ENCODE measurements at regions of chr2 and their contacts with region 1.

Region 1: GRCh38 chr2:45650851-45651414 is 542 bp upstream of the PRKCE start:
- DNase-seq: peak; percentile 84 to 97 (median 97)
- ATAC-seq: peak; percentile 97
- H3K4me3 ChIP-seq: peak overlapping the region; percentile 95
- H3K4me3 Mint-ChIP-seq: peak overlapping the region; percentile 83 to 100 (median 95)
- H3K27ac ChIP-seq: peak overlapping the region; percentile 79
- H3K27ac Mint-ChIP-seq: peak overlapping the region; percentile 90 to 99 (median 95)
- H3K4me1 ChIP-seq: peaks cover 10 to 11% of the 10 kb centered on the region in 2 donors
- H3K4me1 Mint-ChIP-seq: peaks cover 20 to 41% (median 34%) of the 10 kb centered on the region in 7 donors
- H3K27me3 ChIP-seq: peaks cover 0 to 3% of the 10 kb centered on the region in 2 donors
- H3K27me3 Mint-ChIP-seq: peaks cover 0 to 25% (median 0%) of the 10 kb centered on the region in 5 donors

Region 2: DNA sequence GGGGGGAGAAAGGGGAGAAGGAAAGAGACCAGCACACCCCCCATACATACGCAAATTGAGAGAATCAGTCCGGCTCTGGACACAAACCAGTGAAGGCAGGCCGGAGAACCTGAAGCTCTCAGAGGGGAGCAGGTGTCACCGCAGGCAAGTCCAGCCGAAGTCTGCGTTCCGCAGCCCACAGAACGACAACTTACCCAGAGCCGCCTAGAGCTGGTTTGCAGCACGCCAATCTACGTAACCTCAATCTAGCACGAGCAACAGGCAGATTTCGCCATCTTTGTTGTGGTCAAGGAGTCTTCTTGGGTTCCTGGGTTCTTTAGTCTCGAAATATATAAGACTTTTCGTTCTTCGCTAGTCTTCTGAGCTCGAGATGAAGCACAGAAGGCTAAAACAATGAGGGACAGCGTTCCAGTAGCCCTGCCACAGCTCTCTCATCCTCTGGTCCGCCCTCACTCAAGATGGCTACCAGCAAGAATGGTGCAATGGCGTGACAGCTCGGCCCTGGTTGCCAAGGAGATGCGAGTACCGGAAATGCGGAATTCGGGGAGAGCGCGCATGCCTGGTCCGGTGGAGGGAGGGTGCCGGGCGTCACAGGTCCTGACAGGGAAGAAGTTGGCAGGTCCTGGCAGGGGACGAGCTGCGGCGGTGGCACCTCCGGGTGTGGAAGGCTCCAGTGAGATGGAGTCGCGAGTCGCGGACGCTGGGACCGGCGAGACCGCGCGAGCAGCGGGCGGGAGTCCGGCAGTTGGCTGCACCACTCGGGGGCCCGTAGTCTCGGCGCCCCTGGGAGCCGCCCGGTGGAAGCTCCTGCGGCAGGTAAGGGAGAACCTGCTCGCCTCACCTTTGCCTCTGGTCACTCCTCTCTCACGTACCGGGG is 1289.4 kb before region 1 on chr2 and contains the starts of genes CAMKMT and PREPL:
- CTCF ChIA-PET with region 1: no interaction called
- POLR2A ChIA-PET with region 1: no interaction called
- intact Hi-C with region 1: loop called (anchors 5 kb)
- DNase-seq: peak; percentile 95 to 99 (median 99)
- ATAC-seq: peak; percentile 93
- H3K4me3 ChIP-seq: peak within 1 kb of the TSS; percentile 88
- H3K4me3 Mint-ChIP-seq: peak within 1 kb of the TSS; percentile 92 to 100 (median 98)
- H3K27ac ChIP-seq: peak within 1 kb of the TSS; percentile 99
- H3K27ac Mint-ChIP-seq: peak within 1 kb of the TSS; percentile 96 to 100 (median 99)
- H3K4me1 ChIP-seq: peaks cover 16 to 17% of the 10 kb centered on the region in 2 donors
- H3K4me1 Mint-ChIP-seq: peaks cover 22 to 81% (median 61%) of the 10 kb centered on the region in 7 donors
- H3K27me3 ChIP-seq: no peaks in the 10 kb centered on the region
- H3K27me3 Mint-ChIP-seq: peaks cover 0 to 3% (median 0%) of the 10 kb centered on the region in 5 donors
- total RNA-seq, gene CAMKMT: 11.1 to 20.8 (median 18.7) TPM
- total RNA-seq, gene PREPL: 22.0 to 41.9 (median 28.5) TPM

Region 3: DNA sequence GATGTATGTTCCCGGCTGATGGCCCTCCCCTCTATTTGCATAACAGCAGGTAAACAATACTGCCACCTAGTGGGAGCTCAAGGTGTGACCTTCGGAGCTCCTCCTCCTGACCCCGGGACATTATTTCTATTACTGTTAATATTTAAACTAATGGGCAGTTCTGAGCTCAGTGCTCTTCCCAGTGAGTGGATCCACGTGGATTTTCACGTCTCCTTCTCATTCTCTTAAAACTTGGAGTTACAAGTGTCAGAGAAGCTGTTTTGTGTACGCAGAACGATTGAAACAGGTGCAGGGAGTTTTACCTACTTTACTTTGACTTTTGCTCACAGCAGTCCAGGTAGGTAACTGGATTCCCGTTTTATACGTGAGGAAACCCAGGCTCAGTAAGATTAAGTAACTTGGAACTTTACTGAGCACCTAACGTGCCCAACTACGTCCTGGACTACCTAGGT is 127.8 kb after region 1 on chr2:
- CTCF ChIA-PET with region 1: interaction called, 24 read pairs
- POLR2A ChIA-PET with region 1: interaction called, 7 read pairs
- intact Hi-C with region 1: no loop called
- DNase-seq: peak; percentile 19 to 76 (median 67)
- ATAC-seq: peak; percentile 91
- H3K4me3 ChIP-seq: no peak overlapping the region
- H3K4me3 Mint-ChIP-seq: peak overlapping the region; percentile 5 to 77 (median 54)
- H3K27ac ChIP-seq: no peak overlapping the region
- H3K27ac Mint-ChIP-seq: peak overlapping the region in 1 of 9 donors; percentile 19
- H3K4me1 ChIP-seq: no peaks in the 10 kb centered on the region
- H3K4me1 Mint-ChIP-seq: peaks cover 0 to 13% (median 6%) of the 10 kb centered on the region in 7 donors
- H3K27me3 ChIP-seq: no peaks in the 10 kb centered on the region
- H3K27me3 Mint-ChIP-seq: no peaks in the 10 kb centered on the region

Region 4: GRCh38 chr2:46296840-46297545 is 646.1 kb after region 1 on chr2 and contains the start of gene EPAS1:
- CTCF ChIA-PET with region 1: no interaction called
- POLR2A ChIA-PET with region 1: no interaction called
- intact Hi-C with region 1: loop called (anchors 2 kb)
- DNase-seq: peak; percentile 48 to 88 (median 54)
- ATAC-seq: peak; percentile 92
- H3K4me3 ChIP-seq: peak within 1 kb of the TSS; percentile 74
- H3K4me3 Mint-ChIP-seq: peak within 1 kb of the TSS; percentile 84 to 95 (median 92)
- H3K27ac ChIP-seq: no peak within 1 kb of the TSS
- H3K27ac Mint-ChIP-seq: peak within 1 kb of the TSS in 7 of 9 donors; percentile 34 to 89 (median 69)
- H3K4me1 ChIP-seq: peaks cover 18 to 26% of the 10 kb centered on the region in 2 donors
- H3K4me1 Mint-ChIP-seq: peaks cover 14 to 33% (median 26%) of the 10 kb centered on the region in 7 donors
- H3K27me3 ChIP-seq: peaks cover 13 to 18% of the 10 kb centered on the region in 2 donors
- H3K27me3 Mint-ChIP-seq: peaks cover 18 to 89% (median 48%) of the 10 kb centered on the region in 5 donors
- total RNA-seq, gene EPAS1: 1.6 to 17.0 (median 6.4) TPM

Region 5: GRCh38 chr2:46547223-46548102 is 896.5 kb after region 1 on chr2:
- CTCF ChIA-PET with region 1: no interaction called
- POLR2A ChIA-PET with region 1: no interaction called
- intact Hi-C with region 1: no loop called
- DNase-seq: no peak
- ATAC-seq: no peak
- H3K4me3 ChIP-seq: no peak overlapping the region
- H3K4me3 Mint-ChIP-seq: peak overlapping the region in 2 of 10 donors; percentile 6 to 28
- H3K27ac ChIP-seq: no peak overlapping the region
- H3K27ac Mint-ChIP-seq: peak overlapping the region in 5 of 9 donors; percentile 7 to 67 (median 26)
- H3K4me1 ChIP-seq: peaks cover 17 to 31% of the 10 kb centered on the region in 2 donors
- H3K4me1 Mint-ChIP-seq: peaks cover 18 to 77% (median 49%) of the 10 kb centered on the region in 7 donors
- H3K27me3 ChIP-seq: no peaks in the 10 kb centered on the region
- H3K27me3 Mint-ChIP-seq: peaks cover 0 to 4% (median 0%) of the 10 kb centered on the region in 5 donors

Region 6: GRCh38 chr2:46942139-46942517 is 1291.2 kb after region 1 on chr2:
- CTCF ChIA-PET with region 1: no interaction called
- POLR2A ChIA-PET with region 1: no interaction called
- intact Hi-C with region 1: loop called in 1 of 2 experiments (anchors 2 kb)
- DNase-seq: peak; percentile 53 to 79 (median 56)
- ATAC-seq: peak; percentile 68
- H3K4me3 ChIP-seq: peak overlapping the region; percentile 93
- H3K4me3 Mint-ChIP-seq: peak overlapping the region; percentile 90 to 100 (median 98)
- H3K27ac ChIP-seq: peak overlapping the region; percentile 94
- H3K27ac Mint-ChIP-seq: peak overlapping the region; percentile 89 to 99 (median 97)
- H3K4me1 ChIP-seq: peaks cover 22 to 43% of the 10 kb centered on the region in 2 donors
- H3K4me1 Mint-ChIP-seq: peaks cover 24 to 73% (median 64%) of the 10 kb centered on the region in 7 donors
- H3K27me3 ChIP-seq: no peaks in the 10 kb centered on the region
- H3K27me3 Mint-ChIP-seq: no peaks in the 10 kb centered on the region

Measured in naive thymus-derived CD4-positive, alpha-beta T cell (primary cell).